ENCODE measurements at regions of chr10 and their contacts with region 1.

Region 1: GRCh38 chr10:109939315-109939961 is 16.1 kb upstream of the XPNPEP1 start:
- DNase-seq: no peak
- ATAC-seq: peak; percentile 16
- H3K4me3 Mint-ChIP-seq: no peak overlapping the region
- H3K27ac Mint-ChIP-seq: peak overlapping the region; percentile 20
- H3K4me1 Mint-ChIP-seq: peaks cover 48% of the 10 kb centered on the region
- H3K27me3 Mint-ChIP-seq: no peaks in the 10 kb centered on the region

Region 2: GRCh38 chr10:109517748-109518147 is 421.7 kb before region 1 on chr10:
- CTCF ChIA-PET with region 1: no interaction called
- POLR2A ChIA-PET with region 1: no interaction called
- intact Hi-C with region 1: no loop called
- DNase-seq: no peak
- ATAC-seq: no peak
- H3K4me3 Mint-ChIP-seq: no peak overlapping the region
- H3K27ac Mint-ChIP-seq: no peak overlapping the region
- H3K4me1 Mint-ChIP-seq: no peaks in the 10 kb centered on the region
- H3K27me3 Mint-ChIP-seq: no peaks in the 10 kb centered on the region

Region 3: DNA sequence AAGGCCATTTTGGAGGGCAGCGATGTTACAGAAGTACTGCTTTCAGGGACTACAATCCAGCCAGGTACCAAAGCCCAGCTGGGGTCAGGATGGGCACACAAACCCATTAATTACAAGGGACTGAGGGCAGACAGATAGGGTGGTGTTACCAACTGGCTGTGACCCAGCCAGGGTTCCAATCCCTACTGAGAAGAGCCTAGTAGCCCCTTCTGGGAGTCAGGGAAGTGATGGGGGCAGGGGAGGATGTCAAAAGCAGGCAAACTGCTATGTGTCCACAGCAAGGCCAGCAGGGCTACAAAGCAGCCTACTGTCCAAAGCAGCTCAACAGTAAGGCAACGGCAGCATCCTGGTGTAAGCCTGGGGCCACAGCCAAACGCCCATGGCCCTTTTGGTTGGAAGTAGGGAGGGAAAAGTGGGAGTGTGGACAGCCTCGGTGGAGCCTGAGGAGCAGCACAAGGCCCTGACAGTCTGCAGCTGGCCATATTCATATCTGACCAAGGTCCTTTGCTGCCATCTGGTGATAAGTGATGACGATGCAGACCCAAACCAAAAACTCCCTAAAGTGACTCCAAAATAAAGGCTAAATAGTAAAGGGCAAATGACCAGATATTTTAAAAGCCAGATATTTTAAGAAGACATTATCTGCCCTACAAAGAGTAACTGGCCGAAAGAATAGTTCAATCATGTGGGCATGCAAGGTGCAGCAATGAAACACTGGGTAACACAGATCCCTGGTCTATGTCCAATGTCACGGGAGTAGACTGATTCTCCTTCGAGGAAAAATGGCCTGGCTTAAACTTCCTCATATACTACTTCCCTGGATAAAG is 73.1 kb before region 1 on chr10:
- CTCF ChIA-PET with region 1: no interaction called
- POLR2A ChIA-PET with region 1: no interaction called
- intact Hi-C with region 1: no loop called
- DNase-seq: no peak
- ATAC-seq: no peak
- H3K4me3 Mint-ChIP-seq: no peak overlapping the region
- H3K27ac Mint-ChIP-seq: no peak overlapping the region
- H3K4me1 Mint-ChIP-seq: no peaks in the 10 kb centered on the region
- H3K27me3 Mint-ChIP-seq: no peaks in the 10 kb centered on the region

Region 4: GRCh38 chr10:109956454-109957091 is 17.1 kb after region 1 on chr10:
- CTCF ChIA-PET with region 1: interaction called, 15 read pairs
- POLR2A ChIA-PET with region 1: no interaction called
- intact Hi-C with region 1: loop called in 1 of 2 experiments (anchors 2 kb)
- DNase-seq: peak; percentile 54
- ATAC-seq: peak; percentile 96
- H3K4me3 Mint-ChIP-seq: no peak overlapping the region
- H3K27ac Mint-ChIP-seq: no peak overlapping the region
- H3K4me1 Mint-ChIP-seq: peaks cover 2% of the 10 kb centered on the region
- H3K27me3 Mint-ChIP-seq: no peaks in the 10 kb centered on the region

Measured in activated CD4-positive, alpha-beta T cell treated with anti-CD3 and anti-CD28 coated beads for 36 hours (primary cell).